ENCODE measurements at regions of chr7 and their contacts with region 1.

Region 1: GRCh38 chr7:584122-584465 is 64.4 kb upstream of the PDGFA start:
- DNase-seq: peak; percentile 98
- H3K4me3 Mint-ChIP-seq: peak overlapping the region; percentile 85
- H3K27ac Mint-ChIP-seq: peak overlapping the region; percentile 95
- H3K4me1 Mint-ChIP-seq: peaks cover 38% of the 10 kb centered on the region
- H3K27me3 Mint-ChIP-seq: no peaks in the 10 kb centered on the region

Region 2: GRCh38 chr7:362402-363096 is 221.5 kb before region 1 on chr7:
- CTCF ChIA-PET with region 1: no interaction called
- intact Hi-C with region 1: loop called (anchors 5 kb)
- DNase-seq: peak; percentile 69
- H3K4me3 Mint-ChIP-seq: peak overlapping the region; percentile 67
- H3K27ac Mint-ChIP-seq: peak overlapping the region; percentile 79
- H3K4me1 Mint-ChIP-seq: peaks cover 66% of the 10 kb centered on the region
- H3K27me3 Mint-ChIP-seq: no peaks in the 10 kb centered on the region

Region 3: GRCh38 chr7:518630-519483 is 65.2 kb before region 1 on chr7:
- CTCF ChIA-PET with region 1: no interaction called
- intact Hi-C with region 1: loop called (anchors 2 kb)
- DNase-seq: peak; percentile 75
- H3K4me3 Mint-ChIP-seq: peak overlapping the region; percentile 81
- H3K27ac Mint-ChIP-seq: no peak overlapping the region
- H3K4me1 Mint-ChIP-seq: peaks cover 20% of the 10 kb centered on the region
- H3K27me3 Mint-ChIP-seq: peaks cover 33% of the 10 kb centered on the region

Region 4: GRCh38 chr7:620052-620451 is 36.0 kb after region 1 on chr7:
- CTCF ChIA-PET with region 1: interaction called, 3 read pairs
- intact Hi-C with region 1: loop called (anchors 1 kb)
- DNase-seq: peak; percentile 59
- H3K4me3 Mint-ChIP-seq: no peak overlapping the region
- H3K27ac Mint-ChIP-seq: peak overlapping the region; percentile 99
- H3K4me1 Mint-ChIP-seq: peaks cover 60% of the 10 kb centered on the region
- H3K27me3 Mint-ChIP-seq: no peaks in the 10 kb centered on the region

Region 5: GRCh38 chr7:636396-636795 is 52.3 kb after region 1 on chr7:
- CTCF ChIA-PET with region 1: no interaction called
- intact Hi-C with region 1: loop called (anchors 1 kb)
- DNase-seq: peak; percentile 73
- H3K4me3 Mint-ChIP-seq: no peak overlapping the region
- H3K27ac Mint-ChIP-seq: no peak overlapping the region
- H3K4me1 Mint-ChIP-seq: peaks cover 21% of the 10 kb centered on the region
- H3K27me3 Mint-ChIP-seq: no peaks in the 10 kb centered on the region

Region 6: DNA sequence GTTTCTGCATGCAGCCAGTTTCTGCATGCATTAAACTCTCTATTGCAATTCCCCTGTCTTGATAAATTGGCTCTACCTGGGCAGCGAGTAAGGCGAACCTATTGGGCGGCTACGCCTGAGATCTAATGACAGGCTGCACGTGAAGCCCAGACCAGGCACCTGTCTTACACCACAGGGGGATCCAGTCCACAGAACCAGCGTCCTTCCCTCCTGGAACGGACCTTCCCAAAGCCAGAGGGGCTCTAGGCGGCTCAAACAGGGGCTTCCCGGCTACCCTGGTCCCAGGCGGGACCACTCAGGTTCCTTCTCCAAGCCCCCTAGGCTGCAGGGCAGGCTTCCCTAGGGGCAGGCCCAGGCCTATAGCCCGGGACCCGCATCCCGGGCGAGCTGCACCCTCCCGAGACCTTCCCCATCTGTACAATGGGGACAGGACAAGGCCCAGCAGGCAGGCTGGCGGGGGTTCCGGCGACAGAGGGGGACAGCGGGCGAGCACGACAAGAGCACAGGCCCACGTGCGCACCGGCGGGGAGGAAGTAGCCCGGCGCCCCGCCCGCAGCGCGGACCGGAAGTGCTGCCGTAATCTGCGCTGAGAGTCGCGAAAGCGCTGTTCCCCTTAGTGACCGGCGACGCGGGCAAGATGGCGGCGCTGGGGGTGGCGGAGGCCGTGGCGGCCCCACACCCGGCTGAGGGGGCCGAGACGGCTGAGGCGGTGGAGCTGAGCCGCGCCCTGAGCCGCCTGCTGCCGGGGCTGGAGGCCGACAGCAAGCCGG is 142.2 kb after region 1 on chr7 and contains the start of gene DNAAF5:
- CTCF ChIA-PET with region 1: no interaction called
- intact Hi-C with region 1: loop called (anchors 1 kb)
- DNase-seq: peak; percentile 88
- H3K4me3 Mint-ChIP-seq: peak within 1 kb of the TSS; percentile 84
- H3K27ac Mint-ChIP-seq: peak within 1 kb of the TSS; percentile 65
- H3K4me1 Mint-ChIP-seq: peaks cover 31% of the 10 kb centered on the region
- H3K27me3 Mint-ChIP-seq: no peaks in the 10 kb centered on the region
- total RNA-seq, gene DNAAF5: 26.2 to 27.5 TPM